ENCODE measurements at regions of chr1 and their contacts with region 1.

Region 1: DNA sequence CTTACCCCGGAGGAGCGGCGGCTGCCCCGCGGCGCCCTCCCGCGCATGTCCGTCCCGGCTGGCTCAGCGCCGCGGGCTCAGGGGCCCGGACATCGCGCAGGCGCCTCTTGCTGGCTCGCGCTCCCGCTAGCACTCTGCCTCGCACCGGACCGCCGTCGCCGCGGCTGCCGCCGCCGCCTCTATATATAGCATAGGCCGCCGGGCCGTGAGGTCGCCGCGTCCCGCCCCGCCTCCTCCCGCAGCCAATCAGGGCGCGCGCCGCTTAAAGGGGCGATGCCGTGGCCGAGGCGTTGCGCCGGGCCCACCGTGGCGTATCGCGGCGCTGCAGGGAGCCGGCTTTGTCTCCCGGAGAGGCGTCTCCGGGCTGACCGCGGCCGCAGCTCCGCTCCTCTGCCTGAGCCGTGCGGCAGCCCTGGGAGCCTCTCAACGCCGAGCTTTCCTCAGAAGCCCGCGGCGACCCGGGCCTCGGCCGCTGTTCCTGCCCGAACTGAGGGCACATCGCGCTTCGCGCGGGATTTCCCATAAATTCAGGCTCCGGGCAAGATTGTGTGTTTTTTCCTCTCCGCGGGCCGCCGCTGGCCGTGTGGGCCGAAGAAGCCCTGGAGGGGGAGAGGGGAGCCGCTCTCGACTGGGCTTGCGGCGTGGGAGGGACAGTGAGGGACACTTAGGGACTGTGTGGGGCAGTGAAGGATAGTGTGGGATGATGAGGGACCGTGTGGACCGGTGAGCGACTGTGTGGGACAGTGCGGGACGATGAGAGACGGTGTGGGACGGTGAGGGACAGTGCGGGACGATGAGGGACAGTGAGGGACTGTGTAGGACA is at the start of gene ERRFI1:
- DNase-seq: peak; percentile 90 to 99 (median 96)
- H3K4me3 ChIP-seq: peak within 1 kb of the TSS; percentile 65 to 97 (median 88)
- H3K27ac ChIP-seq: peak within 1 kb of the TSS; percentile 68 to 98 (median 94)
- H3K27me3 ChIP-seq: no peaks in the 10 kb centered on the region
- CTCF ChIP-seq: peak in 41 of 56 donors; percentile 11 to 65 (median 36)
- total RNA-seq, gene ERRFI1: 24.9 to 58.2 (median 34.7) TPM

Region 2: DNA sequence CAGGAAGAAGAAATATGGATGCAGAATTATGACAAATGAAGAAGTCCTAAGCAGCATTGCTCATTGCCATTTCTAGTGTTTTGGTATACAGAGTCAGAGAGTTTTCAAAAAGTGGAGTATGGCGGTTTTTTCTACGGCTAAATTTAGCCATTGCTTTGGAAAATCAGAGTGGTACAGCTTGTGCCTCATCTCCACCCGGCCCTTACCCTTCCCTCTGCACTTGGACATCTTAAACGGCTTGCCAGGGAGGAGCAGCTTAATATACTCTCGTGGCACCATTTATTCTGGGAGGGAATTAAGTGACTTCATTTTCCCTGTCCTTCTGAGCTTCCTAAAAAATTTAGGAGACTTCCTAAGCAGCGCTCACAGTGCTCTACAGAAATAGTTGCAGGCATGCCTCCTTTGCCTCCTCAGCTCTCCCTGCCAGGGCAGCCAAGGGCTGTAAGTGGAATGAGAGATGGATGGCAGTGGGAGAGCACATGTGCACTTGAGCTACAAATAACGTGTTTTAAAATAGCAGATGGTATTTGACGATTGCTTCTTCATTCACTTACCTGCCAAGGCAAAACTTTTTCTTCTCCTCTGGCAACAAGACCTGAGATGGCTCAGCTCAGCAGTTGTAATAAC is 306.8 kb before region 1 on chr1:
- intact Hi-C with region 1: no loop called
- DNase-seq: no peak
- H3K4me3 ChIP-seq: no peak overlapping the region
- H3K27ac ChIP-seq: peak overlapping the region in 5 of 59 donors; percentile 14 to 71 (median 25)
- H3K27me3 ChIP-seq: no peaks in the 10 kb centered on the region
- CTCF ChIP-seq: no peak

Region 3: DNA sequence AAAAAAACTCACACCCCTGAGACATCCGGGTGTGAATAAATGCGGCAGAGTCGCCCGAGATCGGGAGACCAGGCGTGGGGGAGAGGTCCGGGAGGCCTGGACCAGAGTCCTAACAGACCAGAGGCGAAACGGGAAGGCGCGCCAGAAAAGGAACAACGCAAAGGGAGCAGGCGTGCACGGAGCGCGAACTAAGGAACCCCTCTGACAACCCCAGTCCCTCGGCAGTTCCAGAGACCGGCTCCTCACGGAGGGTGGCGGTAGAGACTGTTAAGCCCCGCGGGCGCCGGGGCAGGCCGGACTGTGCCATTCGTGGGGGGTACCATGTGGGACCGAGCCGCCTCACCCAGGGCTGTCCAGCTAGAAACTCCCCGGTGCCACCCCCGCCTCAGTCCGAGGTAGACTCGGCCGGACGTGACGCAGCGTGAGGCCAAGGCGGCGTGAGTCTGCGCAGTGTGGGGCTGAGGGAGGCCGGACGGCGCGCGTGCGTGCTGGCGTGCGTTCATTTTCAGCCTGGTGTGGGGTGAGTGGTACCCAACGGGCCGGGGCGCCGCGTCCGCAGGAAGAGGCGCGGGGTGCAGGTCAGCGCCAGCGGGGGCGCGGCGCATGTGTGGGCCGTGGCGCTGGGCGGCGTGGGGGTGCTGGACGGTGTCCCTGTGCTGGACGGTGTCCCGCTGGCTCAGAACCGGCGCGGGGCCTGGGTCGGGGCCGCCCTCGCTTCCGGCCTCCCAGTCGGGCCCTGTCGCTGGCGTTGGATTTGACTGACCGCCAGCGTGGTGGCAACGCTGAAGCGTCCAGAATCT is 64.9 kb before region 1 on chr1 and contains the start of gene PARK7:
- intact Hi-C with region 1: loop called in 1 of 2 experiments (anchors 5 kb)
- DNase-seq: peak; percentile 99 to 100 (median 100)
- H3K4me3 ChIP-seq: peak within 1 kb of the TSS; percentile 67 to 100 (median 86)
- H3K27ac ChIP-seq: peak within 1 kb of the TSS; percentile 38 to 98 (median 94)
- H3K27me3 ChIP-seq: no peaks in the 10 kb centered on the region
- CTCF ChIP-seq: peak in 54 of 56 donors; percentile 21 to 77 (median 58)
- total RNA-seq, gene PARK7: 184 to 358 (median 294) TPM

Region 4: GRCh38 chr1:8314346-8315280 is 288.2 kb after region 1 on chr1:
- intact Hi-C with region 1: loop called (anchors 1 kb)
- DNase-seq: peak; percentile 42 to 88 (median 76)
- H3K4me3 ChIP-seq: peak overlapping the region in 3 of 59 donors; percentile 4 to 13 (median 10)
- H3K27ac ChIP-seq: peak overlapping the region in 1 of 59 donors; percentile 30
- H3K27me3 ChIP-seq: no peaks in the 10 kb centered on the region
- CTCF ChIP-seq: peak; percentile 34 to 94 (median 80)

Region 5: GRCh38 chr1:9349331-9349851 is 1323.0 kb after region 1 on chr1:
- intact Hi-C with region 1: loop called in 1 of 2 experiments (anchors 5 kb)
- DNase-seq: no peak
- H3K4me3 ChIP-seq: no peak overlapping the region
- H3K27ac ChIP-seq: peak overlapping the region in 1 of 59 donors; percentile 19
- H3K27me3 ChIP-seq: no peaks in the 10 kb centered on the region
- CTCF ChIP-seq: no peak